BJ (cell line): ENCODE measurements at regions of chr6 and their contacts with region 1.

Region 1: DNA sequence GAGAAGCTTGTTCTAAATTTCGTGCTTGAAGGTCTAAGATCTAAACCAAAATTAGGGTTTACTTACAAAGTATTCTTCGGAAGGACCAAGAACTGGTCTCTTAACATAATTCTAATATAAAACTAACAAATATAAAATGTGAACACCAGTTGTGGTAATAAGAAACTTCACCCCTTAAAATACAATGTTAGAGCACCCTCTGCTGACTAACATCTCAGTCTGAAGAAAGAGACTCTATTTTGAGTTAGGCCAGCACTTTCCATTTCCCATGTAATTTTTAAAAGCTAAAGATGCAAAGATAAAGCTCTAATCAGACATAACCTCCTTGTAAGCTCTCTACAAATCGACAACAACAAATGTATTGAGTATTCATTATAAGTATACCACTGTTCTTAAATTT is 24.6 kb downstream of the ATG5 start:
- DNase-seq: no peak
- H3K4me3 ChIP-seq: no peak overlapping the region
- H3K27me3 ChIP-seq: no peaks in the 10 kb centered on the region
- CTCF ChIP-seq: peak; percentile 58

Region 2: DNA sequence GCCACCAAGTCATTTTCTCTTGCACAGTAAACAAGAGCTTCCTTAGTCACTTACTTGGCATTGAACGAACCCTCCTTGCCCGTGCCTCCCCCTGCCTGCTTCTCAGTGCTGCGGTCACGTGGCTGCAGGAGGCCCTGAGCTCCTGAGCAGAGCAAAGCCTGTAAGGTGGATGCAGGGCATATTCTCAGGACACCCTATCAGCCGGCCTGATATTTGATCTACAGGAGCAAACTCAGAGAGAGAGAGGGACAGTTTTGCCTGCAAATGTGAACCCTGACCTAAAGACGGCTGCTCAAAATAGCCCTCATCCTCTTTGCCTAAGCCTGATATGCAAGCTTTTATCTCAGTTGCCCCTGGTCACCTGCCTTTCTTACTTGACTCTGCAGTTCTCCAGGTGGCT is 1028.2 kb before region 1 on chr6:
- CTCF ChIA-PET with region 1: no interaction called
- POLR2A ChIA-PET with region 1: no interaction called
- DNase-seq: no peak
- H3K4me3 ChIP-seq: no peak overlapping the region
- H3K27me3 ChIP-seq: no peaks in the 10 kb centered on the region
- CTCF ChIP-seq: no peak

Region 3: DNA sequence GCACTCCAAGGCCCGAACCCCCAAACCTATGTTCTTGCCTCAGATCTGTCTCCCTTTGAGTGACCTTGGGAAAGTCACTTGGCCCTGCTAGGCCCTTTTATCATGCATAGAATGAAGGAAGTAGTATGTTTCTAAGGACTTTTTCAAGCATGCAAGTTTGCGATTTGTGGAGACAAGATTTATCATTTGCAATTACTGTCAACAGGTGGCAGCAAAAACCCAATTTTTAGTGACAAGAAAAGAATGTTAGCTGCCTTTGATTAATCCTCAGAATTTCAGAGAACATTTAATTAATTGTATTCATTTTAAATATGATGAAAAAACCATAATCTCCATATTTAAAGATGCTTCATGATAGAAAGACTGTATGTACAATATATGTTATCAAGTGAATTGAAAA is 869.7 kb before region 1 on chr6:
- CTCF ChIA-PET with region 1: interaction called, 21 read pairs
- POLR2A ChIA-PET with region 1: interaction called, 6 read pairs
- DNase-seq: no peak
- H3K4me3 ChIP-seq: no peak overlapping the region
- H3K27me3 ChIP-seq: no peaks in the 10 kb centered on the region
- CTCF ChIP-seq: peak; percentile 42

Region 4: GRCh38 chr6:105880030-105880492 is 420.9 kb before region 1 on chr6:
- CTCF ChIA-PET with region 1: no interaction called
- POLR2A ChIA-PET with region 1: no interaction called
- DNase-seq: no peak
- H3K4me3 ChIP-seq: no peak overlapping the region
- H3K27me3 ChIP-seq: no peaks in the 10 kb centered on the region
- CTCF ChIP-seq: no peak

Region 5: DNA sequence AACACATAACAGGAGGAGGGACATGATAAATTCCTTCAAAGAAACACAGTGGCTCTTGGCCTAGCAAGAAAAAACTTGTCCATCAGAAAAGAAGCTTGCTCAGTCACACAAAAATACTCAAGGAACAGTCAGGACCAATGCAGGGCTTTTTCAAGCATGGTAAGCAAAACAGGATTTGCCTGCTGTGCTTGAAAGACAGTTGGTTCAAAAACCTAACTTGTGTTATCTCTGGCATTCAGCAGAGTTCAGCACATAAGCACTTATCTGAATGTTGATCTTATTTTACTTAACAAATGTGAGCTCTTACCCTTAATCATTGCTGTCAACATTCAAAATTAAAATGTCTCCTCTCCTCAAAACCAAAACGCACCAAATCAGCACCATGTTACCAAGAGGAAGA is 13.7 kb before region 1 on chr6:
- CTCF ChIA-PET with region 1: interaction called, 10 read pairs
- POLR2A ChIA-PET with region 1: no interaction called
- DNase-seq: no peak
- H3K4me3 ChIP-seq: no peak overlapping the region
- H3K27me3 ChIP-seq: no peaks in the 10 kb centered on the region
- CTCF ChIP-seq: no peak

Region 6: GRCh38 chr6:106421496-106421895 is 120.6 kb after region 1 on chr6:
- CTCF ChIA-PET with region 1: no interaction called
- POLR2A ChIA-PET with region 1: no interaction called
- DNase-seq: no peak
- H3K4me3 ChIP-seq: no peak overlapping the region
- H3K27me3 ChIP-seq: peaks cover 4% of the 10 kb centered on the region
- CTCF ChIP-seq: no peak